RWPE1 (cell line): ENCODE measurements at regions of chr3 and their contacts with region 1.

Region 1: GRCh38 chr3:37098884-37099283 is 75.5 kb downstream of the LRRFIP2 start:
- DNase-seq: no peak
- H3K27ac ChIP-seq: no peak overlapping the region
- CTCF ChIP-seq: no peak

Region 2: DNA sequence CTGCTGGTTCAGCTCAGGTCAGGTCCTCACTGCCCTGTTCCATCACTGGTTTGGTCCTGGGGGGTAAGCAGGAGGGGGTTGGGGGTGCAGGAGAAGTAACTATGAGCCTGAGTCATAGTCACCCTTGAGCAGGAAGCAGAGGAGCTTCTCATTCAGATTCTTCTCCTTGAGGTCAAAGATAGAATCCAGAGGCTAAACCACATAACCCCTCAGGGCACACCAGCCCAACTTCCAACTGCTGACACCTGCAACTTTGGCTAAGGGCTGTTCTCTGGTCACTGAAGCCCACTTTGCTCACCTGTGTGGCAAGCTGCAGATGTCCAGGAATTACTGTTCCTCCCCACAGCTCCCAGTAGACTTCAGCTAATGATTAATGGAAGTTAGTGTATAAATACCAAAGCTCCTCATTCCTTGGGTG is 124.3 kb after region 1 on chr3:
- CTCF ChIA-PET with region 1: no interaction called
- POLR2A ChIA-PET with region 1: interaction called, 12 read pairs
- DNase-seq: no peak
- H3K27ac ChIP-seq: no peak overlapping the region; the same call in 1 of the 2 replicates
- CTCF ChIP-seq: no peak